CD14-positive monocyte (primary cell): ENCODE measurements at regions of chr16 and their contacts with region 1.

Region 1: DNA sequence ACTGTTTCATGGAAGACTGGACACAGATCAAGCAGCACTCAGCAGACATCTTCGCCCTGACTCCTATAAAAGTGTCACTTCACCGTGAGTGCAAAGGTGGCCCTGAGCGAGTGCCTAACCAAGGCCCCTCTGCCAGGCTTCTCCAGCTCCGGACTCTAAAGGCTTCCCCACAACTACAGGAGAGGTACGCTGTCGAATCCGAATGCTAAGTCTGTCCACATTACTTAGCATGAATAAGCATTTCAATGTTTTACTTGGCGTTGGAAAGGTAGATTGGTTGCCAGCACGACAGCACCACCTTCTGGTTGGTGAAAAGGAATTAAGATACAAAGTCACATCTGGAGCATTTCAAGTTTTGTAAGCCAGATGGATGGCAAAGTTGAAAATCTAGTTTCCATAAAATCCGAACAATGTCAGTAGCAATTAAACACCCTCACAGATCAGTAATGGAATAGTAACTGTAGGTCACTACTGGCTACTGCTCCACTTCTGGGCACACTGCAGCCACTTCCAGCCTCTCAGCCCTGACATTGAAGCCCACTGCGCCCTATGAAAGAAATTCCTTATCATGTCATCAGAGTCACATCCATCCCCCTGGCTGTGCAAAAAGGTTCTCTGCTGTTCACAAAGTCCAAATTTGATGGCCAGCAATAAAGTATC is 100.9 kb downstream of the PARN start:
- DNase-seq: peak; percentile 58 to 64 (median 60)
- H3K4me3 ChIP-seq: peak overlapping the region in 1 of 3 experiments; percentile 10
- H3K4me3 Mint-ChIP-seq: no peak overlapping the region
- H3K27ac ChIP-seq: no peak overlapping the region
- H3K27ac Mint-ChIP-seq: peak overlapping the region in 1 of 7 donors; percentile 49
- H3K4me1 ChIP-seq: peaks cover 4% of the 10 kb centered on the region in 2 donors
- H3K4me1 Mint-ChIP-seq: peaks cover 6% of the 10 kb centered on the region
- H3K27me3 ChIP-seq: no peaks in the 10 kb centered on the region
- H3K27me3 Mint-ChIP-seq: no peaks in the 10 kb centered on the region
- CTCF ChIP-seq: peak; percentile 76

Region 2: DNA sequence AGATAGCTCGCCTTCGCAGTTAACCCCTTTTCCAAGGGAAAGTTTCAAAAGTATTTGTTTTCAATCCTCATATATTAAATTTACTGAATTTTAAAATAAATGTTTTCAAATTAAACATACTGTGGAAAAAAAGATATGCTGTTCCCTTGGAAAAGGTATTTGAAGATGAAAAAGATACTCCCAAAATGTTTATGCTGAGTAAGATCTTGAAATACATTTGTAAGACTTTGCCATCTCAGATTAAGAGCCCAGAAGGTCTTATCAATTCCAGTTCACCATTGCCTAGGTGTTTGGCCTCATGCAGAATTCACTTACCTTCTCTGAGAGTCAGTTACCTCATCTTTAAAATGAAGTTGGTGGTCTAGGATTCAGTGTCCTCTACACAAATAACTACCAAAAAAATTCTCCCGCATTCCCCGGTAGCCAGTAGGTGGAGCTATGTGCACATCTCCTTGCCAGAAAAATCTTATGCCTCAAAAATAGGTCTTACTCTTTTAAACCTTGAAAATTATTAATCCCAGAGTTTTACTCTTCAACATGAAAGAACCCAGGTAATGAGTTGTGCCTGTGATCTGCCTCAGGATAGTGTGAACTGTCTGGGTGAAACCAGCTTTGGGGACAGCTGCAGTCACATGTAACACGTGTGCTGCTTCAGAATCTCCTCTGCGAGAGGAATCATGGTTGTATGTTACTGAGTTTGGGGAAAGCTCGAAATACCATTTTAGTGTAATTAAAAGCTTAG is 279.7 kb before region 1 on chr16:
- intact Hi-C with region 1: loop called (anchors 1 to 2 kb)
- DNase-seq: peak; percentile 21 to 44 (median 28)
- H3K4me3 ChIP-seq: no peak overlapping the region
- H3K4me3 Mint-ChIP-seq: no peak overlapping the region
- H3K27ac ChIP-seq: no peak overlapping the region
- H3K27ac Mint-ChIP-seq: peak overlapping the region in 2 of 7 donors; percentile 22 to 67
- H3K4me1 ChIP-seq: no peaks in the 10 kb centered on the region
- H3K4me1 Mint-ChIP-seq: no peaks in the 10 kb centered on the region
- H3K27me3 ChIP-seq: no peaks in the 10 kb centered on the region
- H3K27me3 Mint-ChIP-seq: peaks cover 0 to 1% (median 1%) of the 10 kb centered on the region in 3 donors
- CTCF ChIP-seq: peak; percentile 91

Region 3: GRCh38 chr16:14300705-14301168 is 228.4 kb before region 1 on chr16:
- intact Hi-C with region 1: loop called (anchors 5 kb)
- DNase-seq: peak; percentile 45 to 48 (median 48)
- H3K4me3 ChIP-seq: peak overlapping the region in 1 of 3 experiments; percentile 66
- H3K4me3 Mint-ChIP-seq: peak overlapping the region; percentile 72 to 92
- H3K27ac ChIP-seq: no peak overlapping the region
- H3K27ac Mint-ChIP-seq: no peak overlapping the region
- H3K4me1 ChIP-seq: peaks cover 19 to 25% of the 10 kb centered on the region in 2 donors
- H3K4me1 Mint-ChIP-seq: peaks cover 21% of the 10 kb centered on the region
- H3K27me3 ChIP-seq: peaks cover 24 to 51% of the 10 kb centered on the region in 2 donors
- H3K27me3 Mint-ChIP-seq: peaks cover 48 to 58% (median 57%) of the 10 kb centered on the region in 3 donors
- CTCF ChIP-seq: peak; percentile 36